ENCODE measurements at regions of chr18 and their contacts with region 1.

Region 1: DNA sequence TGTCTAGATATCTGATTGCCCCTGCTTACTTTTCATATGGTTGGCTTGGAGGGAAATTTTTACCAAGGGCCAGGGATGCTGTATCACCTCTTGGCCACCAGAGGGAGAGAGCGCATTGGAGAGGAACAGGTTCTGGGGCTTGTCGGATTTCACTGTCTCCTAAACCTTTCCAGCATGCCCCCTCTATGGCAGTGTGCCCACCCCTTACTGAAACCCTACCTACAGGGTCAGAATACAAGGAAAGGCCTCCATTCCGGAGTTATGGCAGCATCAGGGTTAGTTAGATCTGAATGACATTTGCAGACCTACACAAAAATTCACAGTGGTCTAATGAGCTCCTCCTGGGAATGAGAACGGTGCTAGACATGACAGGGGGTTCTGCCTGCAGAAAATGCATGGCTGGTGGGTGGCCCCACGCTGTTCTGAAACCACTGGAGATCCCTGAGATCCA is 5.8 kb downstream of the SLC14A2 start:
- DNase-seq: peak in 7 of 9 experiments; percentile 10 to 66 (median 39)
- ATAC-seq: peak; percentile 56
- H3K4me3 ChIP-seq: no peak overlapping the region
- H3K4me3 Mint-ChIP-seq: no peak overlapping the region
- H3K27ac ChIP-seq: no peak overlapping the region
- H3K27ac Mint-ChIP-seq: no peak overlapping the region
- H3K4me1 ChIP-seq: no peaks in the 10 kb centered on the region
- H3K4me1 Mint-ChIP-seq: no peaks in the 10 kb centered on the region
- H3K27me3 ChIP-seq: no peaks in the 10 kb centered on the region
- H3K27me3 Mint-ChIP-seq: peaks cover 16% of the 10 kb centered on the region
- CTCF ChIP-seq: peak; percentile 92

Region 2: DNA sequence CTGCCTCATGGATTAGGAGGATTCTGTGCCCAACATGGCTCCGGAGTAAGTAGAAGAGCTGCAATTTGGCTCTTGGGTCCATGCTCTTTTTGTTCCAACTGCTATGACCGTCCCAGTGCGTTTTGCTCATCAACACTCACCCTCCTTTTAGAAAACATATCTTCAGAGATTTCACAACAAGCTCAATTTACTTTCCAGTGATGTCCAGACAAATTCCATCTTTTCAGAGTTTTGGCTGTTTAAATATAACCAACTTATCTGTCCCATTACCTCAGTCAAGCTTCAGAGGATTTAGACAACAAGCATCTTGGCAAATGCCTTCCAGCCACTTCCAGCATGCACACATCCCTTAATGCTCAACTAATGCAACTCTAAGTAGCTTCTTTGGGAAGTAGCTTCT is 12.7 kb before region 1 on chr18:
- CTCF ChIA-PET with region 1: interaction called, 25 read pairs
- POLR2A ChIA-PET with region 1: no interaction called
- intact Hi-C with region 1: no loop called
- DNase-seq: no peak
- ATAC-seq: no peak
- H3K4me3 ChIP-seq: no peak overlapping the region
- H3K4me3 Mint-ChIP-seq: no peak overlapping the region
- H3K27ac ChIP-seq: no peak overlapping the region
- H3K27ac Mint-ChIP-seq: no peak overlapping the region
- H3K4me1 ChIP-seq: no peaks in the 10 kb centered on the region
- H3K4me1 Mint-ChIP-seq: no peaks in the 10 kb centered on the region
- H3K27me3 ChIP-seq: no peaks in the 10 kb centered on the region
- H3K27me3 Mint-ChIP-seq: peaks cover 14% of the 10 kb centered on the region
- CTCF ChIP-seq: no peak

Region 3: DNA sequence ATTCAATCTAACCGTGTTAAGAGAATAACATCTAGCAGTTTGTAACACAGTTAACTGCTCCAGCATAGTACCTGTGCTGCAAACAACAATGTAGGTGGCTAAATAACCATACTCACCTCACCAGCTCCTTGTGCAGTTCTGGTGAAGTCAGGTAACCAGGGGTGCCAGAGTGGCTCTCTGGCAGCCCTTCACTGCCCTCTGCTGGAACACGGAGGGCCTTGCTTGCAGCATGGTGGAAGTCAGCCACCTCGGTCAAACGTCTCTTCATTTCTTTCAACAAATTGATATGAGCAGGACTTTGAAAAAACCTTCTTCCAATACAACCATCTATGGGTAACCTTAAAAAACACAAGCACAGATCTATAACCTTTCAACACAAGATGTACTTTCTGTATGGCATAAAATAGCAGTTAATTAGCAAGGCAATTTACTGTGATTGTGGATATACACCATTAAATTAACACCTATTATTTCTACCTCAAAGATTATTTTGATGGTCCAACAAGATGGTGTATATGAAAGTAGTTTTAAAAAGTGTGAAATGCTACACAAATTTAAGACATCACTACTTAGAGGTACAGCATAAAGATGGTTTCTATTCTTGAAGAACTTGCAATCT is 289.4 kb after region 1 on chr18:
- CTCF ChIA-PET with region 1: interaction called, 4 read pairs
- POLR2A ChIA-PET with region 1: no interaction called
- intact Hi-C with region 1: loop called in 1 of 2 experiments (anchors 1 kb)
- DNase-seq: peak; percentile 35 to 73 (median 63)
- ATAC-seq: peak; percentile 84
- H3K4me3 ChIP-seq: no peak overlapping the region
- H3K4me3 Mint-ChIP-seq: no peak overlapping the region
- H3K27ac ChIP-seq: no peak overlapping the region
- H3K27ac Mint-ChIP-seq: no peak overlapping the region
- H3K4me1 ChIP-seq: no peaks in the 10 kb centered on the region
- H3K4me1 Mint-ChIP-seq: no peaks in the 10 kb centered on the region
- H3K27me3 ChIP-seq: no peaks in the 10 kb centered on the region
- H3K27me3 Mint-ChIP-seq: no peaks in the 10 kb centered on the region
- CTCF ChIP-seq: peak; percentile 71

Measured in CD8-positive, alpha-beta T cell (primary cell).